WTC11 (cell line): ENCODE measurements at regions of chr7 and their contacts with region 1.

Region 1: GRCh38 chr7:132557489-132558044 is 18.7 kb downstream of the PLXNA4 start:
- DNase-seq: no peak
- ATAC-seq: peak; percentile 72
- H3K4me3 Mint-ChIP-seq: no peak overlapping the region
- H3K27ac Mint-ChIP-seq: no peak overlapping the region
- H3K4me1 Mint-ChIP-seq: 0 out of 2 replicates have a peak, but pooled peaks cover 3% of the 10 kb centered on the region
- H3K27me3 Mint-ChIP-seq: peaks cover 45% of the 10 kb centered on the region
- CTCF ChIP-seq: no peak

Region 2: GRCh38 chr7:131970602-131971001 is 587.0 kb before region 1 on chr7:
- CTCF ChIA-PET with region 1: no interaction called
- POLR2A ChIA-PET with region 1: no interaction called
- DNase-seq: no peak
- ATAC-seq: no peak
- H3K4me3 Mint-ChIP-seq: no peak overlapping the region
- H3K27ac Mint-ChIP-seq: no peak overlapping the region; the same call in 1 of the 2 replicates
- H3K4me1 Mint-ChIP-seq: no peaks in the 10 kb centered on the region
- H3K27me3 Mint-ChIP-seq: no peaks in the 10 kb centered on the region
- CTCF ChIP-seq: no peak

Region 3: GRCh38 chr7:132394283-132395198 is 163.0 kb before region 1 on chr7:
- CTCF ChIA-PET with region 1: interaction called, 13 read pairs
- POLR2A ChIA-PET with region 1: no interaction called
- DNase-seq: no peak
- ATAC-seq: peak; percentile 74
- H3K4me3 Mint-ChIP-seq: no peak overlapping the region
- H3K27ac Mint-ChIP-seq: no peak overlapping the region
- H3K4me1 Mint-ChIP-seq: peaks cover 7% of the 10 kb centered on the region
- H3K27me3 Mint-ChIP-seq: no peaks in the 10 kb centered on the region
- CTCF ChIP-seq: no peak

Region 4: DNA sequence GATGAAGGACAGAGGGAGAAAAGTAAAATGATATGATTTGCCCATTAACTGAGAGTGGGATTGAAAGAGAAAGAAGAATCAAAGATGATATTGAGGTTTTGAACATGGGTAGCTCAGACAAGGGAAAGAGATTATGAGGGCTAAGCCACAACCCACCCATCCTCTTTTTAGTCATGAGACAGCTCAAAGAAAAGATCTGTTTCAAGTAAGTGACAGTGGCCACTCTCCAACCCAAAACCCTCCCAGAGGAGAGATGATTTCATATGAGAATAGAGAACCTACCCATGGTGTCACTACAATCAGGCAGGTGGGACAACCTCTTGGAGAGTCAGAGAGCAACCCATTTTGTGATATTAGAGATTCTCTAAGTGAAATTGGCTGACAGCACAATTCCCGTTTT is 13.5 kb before region 1 on chr7:
- CTCF ChIA-PET with region 1: interaction called, 11 read pairs
- POLR2A ChIA-PET with region 1: no interaction called
- DNase-seq: no peak
- ATAC-seq: no peak
- H3K4me3 Mint-ChIP-seq: no peak overlapping the region
- H3K27ac Mint-ChIP-seq: no peak overlapping the region
- H3K4me1 Mint-ChIP-seq: peaks cover 58% of the 10 kb centered on the region
- H3K27me3 Mint-ChIP-seq: peaks cover 9% of the 10 kb centered on the region
- CTCF ChIP-seq: no peak